CD14-positive monocyte (primary cell): ENCODE measurements at regions of chr3 and their contacts with region 1.

Region 1: DNA sequence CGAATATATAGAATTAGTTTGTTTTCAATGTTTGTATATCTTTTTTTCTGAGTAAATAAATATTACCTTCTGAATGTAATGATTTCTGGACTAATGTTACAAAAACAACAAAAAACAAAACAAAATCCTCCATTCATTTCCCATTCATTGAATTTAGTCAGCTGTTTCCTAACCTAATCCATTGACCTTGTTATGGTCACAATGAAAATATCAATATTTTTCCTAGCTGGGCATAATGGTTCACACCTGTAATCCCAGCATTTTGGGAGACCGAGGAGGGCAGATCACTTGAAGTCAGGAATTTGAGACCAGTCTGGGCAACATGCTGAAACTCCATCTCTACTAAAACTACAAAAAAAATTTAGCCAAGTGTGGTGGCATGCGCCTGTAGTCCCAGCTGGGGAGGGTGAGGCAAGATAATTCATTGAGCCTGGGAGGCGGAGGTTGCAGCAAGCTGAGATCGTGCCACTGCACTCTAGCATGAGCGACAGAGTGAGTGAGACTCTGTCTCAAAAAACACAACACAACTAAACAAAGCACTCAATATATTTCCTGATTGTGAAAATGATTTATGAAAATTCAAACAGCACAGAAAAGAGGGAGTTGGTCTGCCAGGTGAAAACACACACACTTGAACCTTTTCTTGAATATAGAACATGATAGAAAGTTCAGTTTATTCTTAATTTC is 23.0 kb upstream of the PLSCR4 start:
- DNase-seq: no peak
- H3K4me3 ChIP-seq: no peak overlapping the region
- H3K4me3 Mint-ChIP-seq: no peak overlapping the region
- H3K27ac ChIP-seq: no peak overlapping the region
- H3K27ac Mint-ChIP-seq: no peak overlapping the region
- H3K4me1 ChIP-seq: no peaks in the 10 kb centered on the region
- H3K4me1 Mint-ChIP-seq: no peaks in the 10 kb centered on the region
- H3K27me3 ChIP-seq: no peaks in the 10 kb centered on the region
- H3K27me3 Mint-ChIP-seq: peaks cover 0 to 2% (median 0%) of the 10 kb centered on the region in 3 donors
- CTCF ChIP-seq: no peak

Region 2: GRCh38 chr3:146233487-146233886 is 40.4 kb before region 1 on chr3:
- intact Hi-C with region 1: loop called in 1 of 2 experiments (anchors 2 kb)
- DNase-seq: no peak
- H3K4me3 ChIP-seq: no peak overlapping the region
- H3K4me3 Mint-ChIP-seq: no peak overlapping the region
- H3K27ac ChIP-seq: no peak overlapping the region
- H3K27ac Mint-ChIP-seq: no peak overlapping the region
- H3K4me1 ChIP-seq: no peaks in the 10 kb centered on the region
- H3K4me1 Mint-ChIP-seq: no peaks in the 10 kb centered on the region
- H3K27me3 ChIP-seq: no peaks in the 10 kb centered on the region
- H3K27me3 Mint-ChIP-seq: peaks cover 0 to 1% (median 0%) of the 10 kb centered on the region in 3 donors
- CTCF ChIP-seq: no peak